IMR-90 (cell line): ENCODE measurements at regions of chr4 and their contacts with region 1.

Region 1: DNA sequence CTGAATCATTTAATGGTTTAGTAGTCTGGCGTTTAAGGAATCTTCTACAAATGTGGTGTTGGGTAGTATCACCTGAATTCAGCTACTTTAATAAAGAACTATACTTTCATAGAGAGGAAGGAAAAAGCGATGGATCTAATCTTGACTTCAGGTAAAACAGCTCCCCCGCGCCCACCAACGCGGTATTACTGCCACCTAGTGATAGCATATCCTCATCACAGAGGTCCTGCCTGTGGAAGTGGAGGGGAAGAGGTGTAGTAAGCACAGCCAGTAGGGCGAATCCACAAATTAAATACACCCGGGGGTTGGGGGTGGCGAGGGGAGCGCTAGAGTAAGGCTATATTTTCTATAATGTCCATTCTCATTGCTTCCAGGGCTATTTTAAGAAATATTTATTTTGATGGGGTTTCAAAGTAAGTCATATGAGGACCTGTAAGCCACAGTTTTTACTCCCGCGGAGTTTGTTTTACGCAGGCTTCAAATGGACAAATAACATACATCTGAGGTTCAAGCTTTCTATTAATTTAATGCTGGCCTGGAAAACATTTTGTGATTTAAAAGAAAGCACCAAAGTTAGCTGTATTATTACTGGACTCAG is 8.3 kb upstream of the DAPP1 start:
- DNase-seq: peak; percentile 21
- ATAC-seq: peak; percentile 63
- H3K4me3 ChIP-seq: no peak overlapping the region
- H3K27ac ChIP-seq: no peak overlapping the region
- H3K4me1 ChIP-seq: no peaks in the 10 kb centered on the region
- H3K27me3 ChIP-seq: peaks cover 3% of the 10 kb centered on the region; the same call in 1 of the 2 replicates
- CTCF ChIP-seq: peak; percentile 59
- POLR2A ChIP-seq: no peak
- RAD21 ChIP-seq: peak; percentile 65

Region 2: GRCh38 chr4:99468889-99469288 is 339.5 kb before region 1 on chr4:
- CTCF ChIA-PET with region 1: no interaction called
- POLR2A ChIA-PET with region 1: no interaction called
- dilution Hi-C with region 1: no loop called
- in situ Hi-C with region 1: no loop called
- intact Hi-C with region 1: loop called (anchors 5 kb)
- DNase-seq: peak; percentile 15
- ATAC-seq: peak; percentile 49
- H3K4me3 ChIP-seq: no peak overlapping the region
- H3K27ac ChIP-seq: no peak overlapping the region
- H3K4me1 ChIP-seq: no peaks in the 10 kb centered on the region
- H3K27me3 ChIP-seq: no peaks in the 10 kb centered on the region
- CTCF ChIP-seq: no peak
- POLR2A ChIP-seq: no peak
- RAD21 ChIP-seq: no peak

Region 3: DNA sequence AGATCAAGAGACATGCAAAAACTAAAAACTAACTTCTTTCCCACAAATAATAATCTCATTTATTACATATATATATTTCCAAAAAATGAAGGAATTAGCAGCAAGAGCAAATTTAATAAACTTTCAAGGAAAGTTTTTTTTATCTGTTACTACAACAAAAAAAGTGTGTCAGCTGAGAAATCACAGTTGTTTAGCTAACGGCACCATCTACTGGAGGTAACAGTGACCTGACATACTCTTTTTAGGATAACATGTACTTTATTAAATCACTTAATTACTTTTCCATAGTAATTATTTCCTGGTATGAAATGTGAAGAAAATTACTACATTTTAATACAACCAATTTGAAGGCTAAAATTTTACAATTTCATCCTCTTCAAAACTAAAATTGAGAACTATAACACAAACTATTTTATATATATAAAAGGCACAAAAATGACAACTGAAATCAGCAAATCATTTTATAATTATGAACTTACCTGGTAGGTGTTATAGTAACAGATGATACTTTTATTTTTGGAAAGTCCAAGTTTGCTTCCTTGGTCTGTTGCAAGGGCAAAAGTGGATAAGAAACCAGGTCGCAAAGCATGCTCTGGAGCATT is 76.8 kb after region 1 on chr4:
- CTCF ChIA-PET with region 1: interaction called, 3 read pairs
- POLR2A ChIA-PET with region 1: no interaction called
- dilution Hi-C with region 1: no loop called
- in situ Hi-C with region 1: no loop called
- intact Hi-C with region 1: loop called (anchors 5 kb)
- DNase-seq: peak; percentile 38
- ATAC-seq: no peak
- H3K4me3 ChIP-seq: no peak overlapping the region
- H3K27ac ChIP-seq: no peak overlapping the region
- H3K4me1 ChIP-seq: no peaks in the 10 kb centered on the region
- H3K27me3 ChIP-seq: no peaks in the 10 kb centered on the region
- CTCF ChIP-seq: peak; percentile 45
- POLR2A ChIP-seq: no peak
- RAD21 ChIP-seq: peak; percentile 58